ENCODE measurements at regions of chr6 and their contacts with region 1.

Region 1: DNA sequence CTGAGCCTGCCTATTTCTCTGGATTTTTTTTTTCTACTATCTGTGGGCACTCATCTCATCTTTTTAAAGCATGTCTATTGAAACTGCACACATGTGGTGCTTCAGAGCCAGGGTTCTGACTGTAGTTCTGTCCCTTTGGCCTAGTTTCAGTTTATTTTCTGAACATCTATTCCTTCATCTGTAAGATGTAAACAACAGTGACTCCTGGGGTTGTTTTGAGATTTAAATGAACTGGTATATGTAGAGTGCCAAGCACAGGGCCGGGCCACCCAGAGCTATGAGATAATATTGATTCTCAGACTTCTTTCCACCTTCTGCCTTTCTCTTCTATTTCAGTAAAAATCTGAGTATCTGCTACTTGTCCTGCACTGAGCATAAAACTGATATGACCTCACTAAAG is 185.1 kb downstream of the CARMIL1 start:
- DNase-seq: no peak
- H3K4me3 ChIP-seq: no peak overlapping the region
- H3K27ac ChIP-seq: no peak overlapping the region
- H3K4me1 ChIP-seq: no peaks in the 10 kb centered on the region
- H3K27me3 ChIP-seq: no peaks in the 10 kb centered on the region
- CTCF ChIP-seq: no peak

Region 2: DNA sequence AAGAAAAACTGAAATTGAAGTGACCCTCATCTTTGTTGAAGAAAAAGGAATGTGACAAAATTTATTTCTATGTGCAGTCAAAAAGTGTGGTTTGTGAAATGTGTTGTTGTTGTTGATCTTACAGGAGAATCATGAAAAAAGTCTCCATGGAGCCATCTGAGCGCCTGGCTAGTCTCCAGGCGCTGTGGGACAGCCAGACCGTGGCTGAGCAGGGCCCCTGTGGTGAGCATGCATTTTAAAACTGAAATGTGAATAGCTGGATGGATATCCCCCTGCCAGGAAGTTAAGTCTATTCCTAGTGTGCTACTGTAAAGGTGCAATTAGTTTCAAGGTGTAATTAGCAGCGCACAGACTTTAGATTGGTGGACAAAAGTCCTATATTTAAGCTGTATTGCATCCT is 14.5 kb before region 1 on chr6:
- CTCF ChIA-PET with region 1: no interaction called
- POLR2A ChIA-PET with region 1: interaction called, 26 read pairs
- intact Hi-C with region 1: no loop called
- DNase-seq: peak; percentile 75
- H3K4me3 ChIP-seq: no peak overlapping the region
- H3K27ac ChIP-seq: no peak overlapping the region
- H3K4me1 ChIP-seq: peaks cover 10% of the 10 kb centered on the region
- H3K27me3 ChIP-seq: no peaks in the 10 kb centered on the region
- CTCF ChIP-seq: no peak